Left ventricle myocardium superior (tissue), 1 donor: ENCODE measurements at regions of chr1 and their contacts with region 1.

Region 1: DNA sequence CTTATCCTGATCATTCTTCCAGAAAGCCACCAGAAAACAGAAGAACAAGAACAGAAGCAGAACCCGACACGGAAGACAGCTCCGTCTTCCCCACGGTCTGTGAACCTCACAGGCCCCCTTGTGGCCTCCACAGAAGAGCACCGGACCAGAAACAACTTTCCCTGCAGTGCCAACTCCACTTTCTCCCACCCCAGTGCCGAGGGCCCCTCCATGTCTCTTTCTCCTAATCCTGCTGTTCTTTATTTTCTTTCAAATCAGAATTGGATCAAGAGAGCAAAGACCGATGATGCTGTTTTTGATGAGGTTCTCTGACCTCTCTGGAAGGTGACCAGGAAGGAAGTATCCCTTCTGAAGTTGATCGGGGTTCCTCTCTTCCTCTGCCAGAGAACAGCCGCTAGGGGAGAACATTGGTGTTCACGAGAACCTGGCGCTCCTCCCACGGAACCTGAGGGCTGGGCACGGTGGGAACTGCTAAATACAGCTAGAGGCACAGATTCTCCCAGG is 58.9 kb upstream of the CTTNBP2NL start:
- DNase-seq: peak; percentile 70
- ATAC-seq: peak; percentile 94

Region 2: GRCh38 chr1:111990878-111991718 is 346.0 kb before region 1 on chr1:
- intact Hi-C with region 1: loop called (anchors 5 kb)
- DNase-seq: peak; percentile 85
- ATAC-seq: peak; percentile 73